BJ (cell line): ENCODE measurements at regions of chr15 and their contacts with region 1.

Region 1: GRCh38 chr15:28901987-28902745 is 16.4 kb downstream of the APBA2 start:
- DNase-seq: no peak
- H3K4me3 ChIP-seq: no peak overlapping the region
- H3K27me3 ChIP-seq: no peaks in the 10 kb centered on the region
- CTCF ChIP-seq: no peak

Region 2: GRCh38 chr15:28913171-28913765 is 11.1 kb after region 1 on chr15:
- CTCF ChIA-PET with region 1: interaction called, 11 read pairs
- POLR2A ChIA-PET with region 1: no interaction called
- DNase-seq: no peak
- H3K4me3 ChIP-seq: no peak overlapping the region
- H3K27me3 ChIP-seq: no peaks in the 10 kb centered on the region
- CTCF ChIP-seq: no peak

Region 3: GRCh38 chr15:28935326-28935725 is 33.2 kb after region 1 on chr15:
- CTCF ChIA-PET with region 1: no interaction called
- POLR2A ChIA-PET with region 1: no interaction called
- DNase-seq: no peak
- H3K4me3 ChIP-seq: no peak overlapping the region
- H3K27me3 ChIP-seq: no peaks in the 10 kb centered on the region
- CTCF ChIP-seq: peak; percentile 45